ENCODE measurements at regions of chr18 and their contacts with region 1.

Region 1: DNA sequence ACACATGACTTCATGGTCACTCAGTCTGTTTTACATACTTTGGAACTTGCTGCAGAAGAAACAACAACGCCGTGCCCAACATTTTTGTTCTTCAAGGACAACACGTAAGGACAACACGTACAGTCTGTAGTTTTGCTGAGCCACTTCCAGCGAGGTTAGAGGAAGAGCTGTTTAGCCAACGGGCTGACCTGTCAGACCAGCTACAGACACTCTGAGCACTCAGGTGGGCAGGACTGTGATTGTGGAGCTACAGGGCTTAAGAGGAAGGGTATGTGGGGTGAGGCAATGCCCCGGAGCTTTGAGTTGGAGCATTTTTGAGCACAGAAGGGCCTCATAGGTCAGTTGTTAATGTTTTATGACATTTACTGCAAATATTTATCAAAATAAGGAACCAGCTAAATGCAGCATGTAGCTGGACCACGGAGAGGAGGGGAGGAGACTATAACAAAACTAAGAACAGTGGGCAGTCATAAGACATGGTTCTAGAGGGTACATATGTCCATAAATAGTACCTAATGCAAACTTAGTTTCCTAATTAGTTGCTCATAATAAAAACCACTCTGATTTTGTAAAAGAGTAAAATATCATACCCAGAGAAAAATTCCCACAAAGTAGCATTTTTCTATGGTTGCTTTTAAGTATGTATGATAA is 26.3 kb upstream of the NPC1 start:
- DNase-seq: no peak
- H3K4me3 ChIP-seq: no peak overlapping the region
- H3K27ac ChIP-seq: no peak overlapping the region
- H3K4me1 ChIP-seq: no peaks in the 10 kb centered on the region; a peak in 1 of 7 replicates
- H3K27me3 ChIP-seq: no peaks in the 10 kb centered on the region
- CTCF ChIP-seq: no peak
- EP300 ChIP-seq: no peak
- POLR2A ChIP-seq: no peak
- RAD21 ChIP-seq: no peak

Region 2: DNA sequence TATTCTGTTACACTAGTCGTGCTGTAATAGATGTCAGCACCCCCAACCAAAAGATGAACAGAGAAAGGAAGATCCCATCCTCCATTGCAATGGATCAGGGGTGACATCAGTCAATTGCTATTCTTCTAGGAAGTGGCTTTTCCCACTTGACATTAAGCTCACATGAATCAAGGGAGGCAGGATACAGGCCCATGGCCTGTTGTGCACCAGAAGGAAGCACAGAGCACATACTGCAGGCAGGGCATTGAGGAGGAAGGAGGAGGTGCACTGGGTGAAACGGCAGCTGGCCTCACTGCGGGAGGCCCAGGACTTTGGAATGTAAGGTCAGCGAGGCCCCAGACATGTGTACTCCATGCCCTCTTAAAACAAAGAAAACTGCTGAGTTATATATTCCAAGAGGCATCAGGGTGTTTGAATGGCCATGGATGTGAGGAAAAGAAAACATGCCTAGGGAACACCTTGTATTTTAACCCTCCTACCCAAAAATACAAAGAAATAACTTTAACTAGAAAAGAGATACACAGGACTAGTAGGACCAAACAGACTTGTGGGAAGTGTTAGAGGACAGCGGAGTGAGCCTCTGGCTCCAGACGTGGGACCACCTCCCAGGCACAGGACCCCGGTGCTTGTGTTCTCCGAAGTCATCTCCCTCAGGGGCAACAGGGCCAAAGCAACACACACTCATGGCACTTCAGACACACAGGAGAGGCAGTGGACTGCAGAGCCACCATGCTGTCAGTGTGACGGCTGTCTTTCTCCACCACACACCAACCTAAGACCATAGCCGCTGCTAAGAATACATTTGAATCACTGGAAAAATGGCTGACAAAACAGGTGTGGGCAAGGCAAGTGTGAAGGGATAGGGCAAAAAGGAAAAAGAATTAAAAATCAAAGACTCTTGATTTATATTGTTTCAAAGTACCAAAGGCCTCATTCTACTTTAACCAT is 210.9 kb before region 1 on chr18:
- CTCF ChIA-PET with region 1: no interaction called
- POLR2A ChIA-PET with region 1: no interaction called
- DNase-seq: no peak
- H3K4me3 ChIP-seq: no peak overlapping the region
- H3K27ac ChIP-seq: peak overlapping the region; percentile 48; the same call in 1 of the 2 replicates
- H3K4me1 ChIP-seq: peaks cover 7 to 10% (median 9%) of the 10 kb centered on the region in 4 experiments
- H3K27me3 ChIP-seq: no peaks in the 10 kb centered on the region
- CTCF ChIP-seq: no peak
- EP300 ChIP-seq: no peak
- POLR2A ChIP-seq: no peak
- RAD21 ChIP-seq: no peak

Region 3: GRCh38 chr18:23689031-23689615 is 76.6 kb after region 1 on chr18 and contains the start of gene LAMA3:
- CTCF ChIA-PET with region 1: no interaction called
- POLR2A ChIA-PET with region 1: no interaction called
- DNase-seq: peak in 1 of 2 experiments; percentile 73
- H3K4me3 ChIP-seq: peak within 1 kb of the TSS; percentile 44 to 68 (median 50)
- H3K27ac ChIP-seq: no peak within 1 kb of the TSS
- H3K4me1 ChIP-seq: peaks cover 0 to 7% (median 5%) of the 10 kb centered on the region in 4 experiments; a peak in 3 of 7 replicates
- H3K27me3 ChIP-seq: peaks cover 11 to 35% (median 29%) of the 10 kb centered on the region in 4 experiments
- CTCF ChIP-seq: 0 out of 4 replicates have a peak, but pooled peaks of 1 of the 3 experiments have one; percentile 13
- EP300 ChIP-seq: no peak
- POLR2A ChIP-seq: no peak
- RAD21 ChIP-seq: no peak
- total RNA-seq, gene LAMA3: 3.3 and 5.0 TPM in 2 replicates

Region 4: DNA sequence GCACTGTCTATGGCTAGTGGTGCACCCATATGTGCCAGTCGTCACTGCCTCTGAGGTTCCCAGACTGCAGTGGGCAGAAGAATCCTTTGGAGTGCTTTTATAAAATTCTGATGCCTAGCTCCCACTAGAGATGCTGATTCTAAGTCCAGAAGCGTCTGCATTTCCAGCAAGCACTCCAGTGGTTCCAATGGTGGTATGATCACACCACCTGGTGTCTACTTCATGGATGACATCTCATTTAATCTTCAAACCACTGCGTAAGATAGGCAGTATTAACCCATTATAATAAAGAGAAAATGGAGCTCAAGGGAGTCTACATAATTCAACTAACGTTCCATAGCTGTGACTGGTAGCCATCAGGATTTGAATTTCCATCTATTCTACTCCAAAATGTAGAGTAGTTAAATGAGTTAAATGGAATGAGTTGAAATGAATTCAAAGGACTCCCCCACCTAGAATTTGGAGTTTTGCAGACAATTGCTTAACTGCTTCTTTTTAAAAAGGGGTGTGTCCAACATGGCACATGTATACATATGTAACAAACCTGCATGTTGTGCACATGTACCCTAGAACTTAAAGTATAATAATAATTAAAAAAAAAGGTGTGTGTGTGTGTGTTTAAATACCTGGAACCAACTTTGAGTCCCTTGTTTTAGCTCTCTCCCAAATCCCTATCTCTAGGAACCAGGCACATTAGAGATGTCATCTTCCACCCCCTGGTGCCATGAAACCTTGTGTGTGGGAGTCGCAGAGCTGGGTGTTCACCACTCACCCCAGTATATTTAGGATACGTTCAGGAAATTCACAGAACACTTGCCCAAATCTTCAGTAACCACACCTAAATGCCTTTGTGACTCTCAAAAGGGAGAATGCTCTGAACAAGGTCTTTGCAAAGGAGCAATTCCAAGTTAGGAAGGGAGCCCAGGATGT is 90.8 kb after region 1 on chr18:
- CTCF ChIA-PET with region 1: interaction called, 17 read pairs
- POLR2A ChIA-PET with region 1: no interaction called
- DNase-seq: no peak
- H3K4me3 ChIP-seq: no peak overlapping the region
- H3K27ac ChIP-seq: no peak overlapping the region
- H3K4me1 ChIP-seq: no peaks in the 10 kb centered on the region
- H3K27me3 ChIP-seq: no peaks in the 10 kb centered on the region
- CTCF ChIP-seq: peak in 2 of 3 experiments; percentile 53 to 68; a peak in 3 of 4 replicates
- EP300 ChIP-seq: no peak
- POLR2A ChIP-seq: no peak
- RAD21 ChIP-seq: peak; percentile 88 to 90